Heart right ventricle (tissue), 16 donors: ENCODE measurements at regions of chr2 and their contacts with region 1.

Region 1: DNA sequence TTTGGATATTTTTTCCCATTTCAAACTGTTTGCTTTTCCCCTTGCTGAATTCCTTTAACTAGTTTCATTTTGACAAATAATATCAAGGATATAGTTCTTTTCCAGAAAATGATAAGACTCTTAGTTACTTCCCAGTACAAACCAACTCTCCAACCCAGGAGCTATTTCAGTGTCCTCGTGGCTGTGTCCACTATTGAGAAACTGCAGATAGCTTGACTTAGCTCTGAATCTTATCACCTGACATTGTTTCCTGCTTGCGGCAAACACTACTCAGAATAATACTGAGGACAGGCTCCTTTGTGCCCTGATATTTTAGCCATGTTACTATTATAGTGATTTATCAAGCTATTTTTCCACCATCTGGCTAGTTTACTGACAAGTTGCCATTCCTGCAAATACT is 74.6 kb downstream of the KLF7 start:
- DNase-seq: no peak
- ATAC-seq: peak; percentile 73 to 87 (median 80)
- H3K4me3 ChIP-seq: no peak overlapping the region
- H3K27ac ChIP-seq: peak overlapping the region; percentile 24 to 86 (median 78)
- H3K4me1 ChIP-seq: peaks cover 34 to 99% (median 93%) of the 10 kb centered on the region in 9 donors
- H3K27me3 ChIP-seq: no peaks in the 10 kb centered on the region
- CTCF ChIP-seq: no peak

Region 2: DNA sequence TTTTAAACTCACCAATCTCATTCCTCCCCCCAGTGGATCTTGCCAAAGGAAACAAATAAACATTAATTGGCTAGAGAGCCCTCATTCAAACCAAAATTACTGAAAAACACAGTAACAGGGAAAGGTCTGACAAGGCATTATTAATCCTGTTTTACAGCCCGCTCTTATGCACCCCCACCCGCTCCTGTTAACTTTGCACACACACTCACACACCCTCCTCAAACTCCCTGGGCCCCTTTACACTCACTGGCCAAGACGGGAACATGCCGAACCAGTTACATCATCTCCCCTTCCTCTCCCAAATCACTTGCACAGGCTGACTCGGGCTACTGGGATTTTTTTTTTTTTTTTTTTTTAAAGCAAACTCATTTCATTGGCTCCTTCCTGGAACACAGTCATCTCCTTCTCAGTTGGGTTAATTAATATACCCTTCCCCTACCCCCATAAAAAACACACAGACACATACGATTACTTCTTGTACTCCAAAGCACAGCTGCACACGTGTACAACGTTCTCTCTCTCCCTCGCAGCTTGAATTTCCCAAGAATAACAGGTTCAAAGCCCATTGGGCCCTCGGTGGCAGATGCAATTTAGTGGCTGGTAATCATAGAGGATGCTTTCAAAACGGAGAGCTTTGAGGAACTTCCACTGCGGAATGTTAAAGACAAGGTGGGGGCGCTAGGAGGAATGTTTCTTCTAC is 42.8 kb after region 1 on chr2:
- intact Hi-C with region 1: loop called in 4 of 10 experiments (anchors 5 kb)
- DNase-seq: peak; percentile 56 to 88
- ATAC-seq: peak; percentile 93 to 98 (median 96)
- H3K4me3 ChIP-seq: peak overlapping the region in 4 of 10 donors; percentile 5 to 32 (median 18)
- H3K27ac ChIP-seq: peak overlapping the region; percentile 76 to 94 (median 87)
- H3K4me1 ChIP-seq: peaks cover 40 to 100% (median 96%) of the 10 kb centered on the region in 9 donors
- H3K27me3 ChIP-seq: no peaks in the 10 kb centered on the region
- CTCF ChIP-seq: no peak

Region 3: GRCh38 chr2:207143215-207144172 is 52.3 kb after region 1 on chr2:
- intact Hi-C with region 1: loop called in 3 of 10 experiments (anchors 5 to 10 kb)
- DNase-seq: peak; percentile 72 to 80
- ATAC-seq: peak; percentile 77 to 91 (median 87)
- H3K4me3 ChIP-seq: peak overlapping the region in 8 of 10 donors; percentile 6 to 44 (median 28)
- H3K27ac ChIP-seq: peak overlapping the region; percentile 69 to 94 (median 88)
- H3K4me1 ChIP-seq: peaks cover 29 to 100% (median 97%) of the 10 kb centered on the region in 9 donors
- H3K27me3 ChIP-seq: no peaks in the 10 kb centered on the region
- CTCF ChIP-seq: no peak